ENCODE measurements at regions of chr1 and their contacts with region 1.

Region 1: DNA sequence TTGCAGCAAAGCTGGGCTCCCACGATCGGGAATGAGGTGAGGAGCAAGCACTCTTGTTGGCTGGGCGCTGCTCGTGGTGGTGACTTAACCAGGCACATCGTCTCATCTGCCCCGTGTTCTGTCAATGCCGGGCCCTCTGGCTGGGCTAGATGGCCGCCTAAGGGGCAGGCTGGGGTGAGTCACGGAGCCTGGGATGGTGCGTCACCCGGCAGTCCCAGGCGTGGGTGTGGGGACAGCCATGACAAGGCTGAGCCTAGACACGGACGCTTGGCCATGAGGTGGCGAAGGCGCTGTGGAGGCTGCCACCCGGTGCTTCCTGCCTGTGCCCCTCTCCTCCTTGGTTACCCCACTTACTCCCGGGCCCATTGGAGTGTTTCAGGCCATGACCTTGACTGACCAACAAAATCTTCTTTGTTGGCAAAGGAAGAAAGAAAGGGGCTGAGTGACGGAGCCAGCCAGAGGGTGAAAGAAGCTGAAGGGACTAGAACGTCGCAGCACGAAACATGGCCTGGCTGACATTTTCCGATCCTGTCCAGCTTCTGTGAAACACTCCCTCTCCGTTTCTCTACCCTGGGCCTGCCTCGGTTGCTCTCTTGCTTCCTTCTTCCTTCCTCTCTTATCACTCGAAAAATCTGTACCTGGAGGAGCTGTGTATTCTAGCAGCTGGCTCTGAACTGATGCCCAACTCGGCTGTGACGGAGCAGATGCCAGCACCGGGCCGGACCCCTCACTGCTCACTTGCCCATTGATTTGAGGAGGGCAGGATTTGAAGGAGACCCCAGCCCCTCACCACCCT is 596 bp downstream of the CD247 start:
- DNase-seq: peak; percentile 88
- H3K4me3 Mint-ChIP-seq: peak overlapping the region; percentile 99
- H3K27ac Mint-ChIP-seq: peak overlapping the region; percentile 99
- H3K4me1 Mint-ChIP-seq: peaks cover 45% of the 10 kb centered on the region
- H3K27me3 Mint-ChIP-seq: peaks cover 11% of the 10 kb centered on the region

Region 2: GRCh38 chr1:167401260-167401873 is 116.4 kb before region 1 on chr1:
- CTCF ChIA-PET with region 1: interaction called, 19 read pairs
- POLR2A ChIA-PET with region 1: no interaction called
- DNase-seq: peak; percentile 57
- H3K4me3 Mint-ChIP-seq: no peak overlapping the region
- H3K27ac Mint-ChIP-seq: no peak overlapping the region
- H3K4me1 Mint-ChIP-seq: no peaks in the 10 kb centered on the region
- H3K27me3 Mint-ChIP-seq: no peaks in the 10 kb centered on the region

Region 3: DNA sequence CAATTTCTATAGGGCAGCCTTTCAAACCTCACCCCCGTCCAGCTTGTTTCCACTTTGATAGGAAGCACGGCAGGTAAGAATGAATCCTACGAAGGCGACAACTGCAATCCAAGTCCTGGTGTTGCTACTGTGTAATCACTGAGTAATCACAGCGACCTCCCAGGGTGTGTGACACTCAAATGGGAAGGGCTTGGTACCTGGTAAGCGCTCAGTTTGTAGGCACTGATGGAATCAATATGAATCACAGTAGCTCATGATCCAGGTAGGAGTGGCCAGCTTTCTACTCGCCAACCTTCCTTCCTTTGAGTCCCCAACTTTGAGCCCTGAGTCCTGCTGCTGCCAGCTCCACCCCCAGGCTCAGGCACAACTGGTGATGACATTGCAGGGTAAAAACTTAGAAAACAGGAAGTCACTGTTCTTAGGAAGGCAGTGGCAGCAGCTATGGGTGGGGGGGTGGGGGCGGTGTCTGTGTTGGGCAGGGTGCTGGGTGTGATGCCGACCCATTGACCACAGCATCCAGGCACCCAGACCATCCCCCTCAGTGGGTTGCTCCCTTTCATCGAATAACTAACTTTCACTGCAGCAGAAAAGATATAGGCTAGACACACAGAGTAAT is 70.1 kb before region 1 on chr1:
- CTCF ChIA-PET with region 1: interaction called, 37 read pairs
- POLR2A ChIA-PET with region 1: interaction called, 143 read pairs
- DNase-seq: peak; percentile 84
- H3K4me3 Mint-ChIP-seq: peak overlapping the region; percentile 28
- H3K27ac Mint-ChIP-seq: peak overlapping the region; percentile 97
- H3K4me1 Mint-ChIP-seq: peaks cover 85% of the 10 kb centered on the region
- H3K27me3 Mint-ChIP-seq: no peaks in the 10 kb centered on the region

Region 4: GRCh38 chr1:167482184-167482583 is 35.5 kb before region 1 on chr1:
- CTCF ChIA-PET with region 1: interaction called, 8 read pairs
- POLR2A ChIA-PET with region 1: interaction called, 25 read pairs
- DNase-seq: peak; percentile 61
- H3K4me3 Mint-ChIP-seq: no peak overlapping the region
- H3K27ac Mint-ChIP-seq: peak overlapping the region; percentile 87
- H3K4me1 Mint-ChIP-seq: peaks cover 92% of the 10 kb centered on the region
- H3K27me3 Mint-ChIP-seq: no peaks in the 10 kb centered on the region

Region 5: DNA sequence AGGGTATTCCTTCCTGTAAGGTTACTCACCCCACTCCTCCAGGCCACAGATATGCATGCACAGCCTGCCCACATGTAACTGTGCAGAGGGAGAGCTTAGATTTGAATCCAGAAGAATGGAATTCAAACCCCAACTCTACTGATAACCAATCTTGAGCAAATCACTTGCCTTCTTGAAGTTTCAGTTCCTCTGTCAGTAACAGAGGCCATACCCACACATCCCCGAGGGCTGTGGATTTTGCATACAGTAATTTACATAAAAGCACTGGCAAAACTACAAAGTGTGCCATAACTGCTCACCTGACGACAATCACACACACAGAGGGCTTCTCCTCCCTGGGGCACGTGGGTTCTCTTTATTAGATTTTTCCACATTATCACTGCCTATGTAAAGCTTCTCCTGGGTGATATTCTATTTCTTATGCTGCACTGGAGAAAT is 18.1 kb before region 1 on chr1:
- CTCF ChIA-PET with region 1: interaction called, 36 read pairs
- POLR2A ChIA-PET with region 1: interaction called, 149 read pairs
- DNase-seq: peak; percentile 41
- H3K4me3 Mint-ChIP-seq: peak overlapping the region; percentile 5
- H3K27ac Mint-ChIP-seq: peak overlapping the region; percentile 86
- H3K4me1 Mint-ChIP-seq: peaks cover 96% of the 10 kb centered on the region
- H3K27me3 Mint-ChIP-seq: no peaks in the 10 kb centered on the region

Region 6: DNA sequence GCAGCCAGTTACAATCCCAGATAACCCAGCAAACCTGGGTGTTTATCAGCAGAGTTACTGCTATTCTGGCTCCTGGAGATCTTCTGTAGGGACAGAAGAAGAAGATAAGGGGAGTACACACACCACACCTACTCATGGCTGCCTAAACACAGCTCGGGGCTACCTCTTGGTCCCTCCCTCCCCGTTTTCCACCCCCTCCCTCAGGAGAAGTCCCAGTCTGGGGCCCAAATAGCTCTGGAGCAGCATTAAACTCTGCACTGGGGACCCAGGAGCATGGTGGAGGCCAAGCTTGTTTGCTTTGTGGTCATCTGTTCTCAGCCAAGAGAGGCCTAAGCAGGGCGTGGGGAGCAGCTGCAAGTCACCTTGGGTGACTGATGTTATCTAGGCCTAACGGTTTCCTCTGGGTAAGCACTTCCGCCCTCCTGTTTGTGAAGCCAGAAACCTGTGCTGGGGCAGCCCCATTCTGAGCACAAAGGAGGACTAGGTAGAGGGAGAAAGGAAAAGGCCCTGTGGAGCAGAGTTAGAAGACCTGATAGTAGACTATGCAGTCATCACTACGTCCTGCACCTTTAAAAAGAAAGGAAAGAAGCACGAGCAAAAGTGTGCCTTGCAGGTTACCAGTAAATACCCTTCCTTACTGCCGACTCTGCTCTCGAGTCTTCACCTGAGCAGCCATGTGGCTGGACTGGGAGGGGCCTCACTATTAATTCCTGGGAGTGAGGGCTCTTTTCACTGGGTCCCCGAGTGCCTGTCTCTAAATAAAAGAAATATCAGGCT is 110.3 kb after region 1 on chr1:
- CTCF ChIA-PET with region 1: no interaction called
- POLR2A ChIA-PET with region 1: interaction called, 10 read pairs
- DNase-seq: peak; percentile 88
- H3K4me3 Mint-ChIP-seq: peak overlapping the region; percentile 87
- H3K27ac Mint-ChIP-seq: peak overlapping the region; percentile 97
- H3K4me1 Mint-ChIP-seq: peaks cover 58% of the 10 kb centered on the region
- H3K27me3 Mint-ChIP-seq: no peaks in the 10 kb centered on the region

Measured in activated CD4-positive, alpha-beta memory T cell treated with anti-CD3 and anti-CD28 coated beads, Interleukin-2, amount 10 ng/mL, durations not matched to agents 7 days and 5 days (primary cell).